ENCODE measurements at regions of chr11 and their contacts with region 1.

Region 1: GRCh38 chr11:59053387-59053786 is 32.7 kb upstream of the GLYATL1B start:
- DNase-seq: peak; percentile 80
- H3K4me3 Mint-ChIP-seq: no peak overlapping the region
- H3K27ac Mint-ChIP-seq: no peak overlapping the region
- H3K4me1 Mint-ChIP-seq: no peaks in the 10 kb centered on the region
- H3K27me3 Mint-ChIP-seq: peaks cover 39% of the 10 kb centered on the region
- CTCF ChIP-seq: peak; percentile 55

Region 2: GRCh38 chr11:58446294-58446693 is 607.1 kb before region 1 on chr11:
- CTCF ChIA-PET with region 1: no interaction called
- intact Hi-C with region 1: no loop called
- DNase-seq: no peak
- H3K4me3 Mint-ChIP-seq: no peak overlapping the region
- H3K27ac Mint-ChIP-seq: no peak overlapping the region
- H3K4me1 Mint-ChIP-seq: no peaks in the 10 kb centered on the region
- H3K27me3 Mint-ChIP-seq: no peaks in the 10 kb centered on the region
- CTCF ChIP-seq: no peak

Region 3: GRCh38 chr11:58856806-58857205 is 196.6 kb before region 1 on chr11:
- CTCF ChIA-PET with region 1: no interaction called
- intact Hi-C with region 1: loop called (anchors 10 kb)
- DNase-seq: no peak
- H3K4me3 Mint-ChIP-seq: no peak overlapping the region
- H3K27ac Mint-ChIP-seq: no peak overlapping the region
- H3K4me1 Mint-ChIP-seq: no peaks in the 10 kb centered on the region
- H3K27me3 Mint-ChIP-seq: peaks cover 45% of the 10 kb centered on the region
- CTCF ChIP-seq: no peak

Region 4: DNA sequence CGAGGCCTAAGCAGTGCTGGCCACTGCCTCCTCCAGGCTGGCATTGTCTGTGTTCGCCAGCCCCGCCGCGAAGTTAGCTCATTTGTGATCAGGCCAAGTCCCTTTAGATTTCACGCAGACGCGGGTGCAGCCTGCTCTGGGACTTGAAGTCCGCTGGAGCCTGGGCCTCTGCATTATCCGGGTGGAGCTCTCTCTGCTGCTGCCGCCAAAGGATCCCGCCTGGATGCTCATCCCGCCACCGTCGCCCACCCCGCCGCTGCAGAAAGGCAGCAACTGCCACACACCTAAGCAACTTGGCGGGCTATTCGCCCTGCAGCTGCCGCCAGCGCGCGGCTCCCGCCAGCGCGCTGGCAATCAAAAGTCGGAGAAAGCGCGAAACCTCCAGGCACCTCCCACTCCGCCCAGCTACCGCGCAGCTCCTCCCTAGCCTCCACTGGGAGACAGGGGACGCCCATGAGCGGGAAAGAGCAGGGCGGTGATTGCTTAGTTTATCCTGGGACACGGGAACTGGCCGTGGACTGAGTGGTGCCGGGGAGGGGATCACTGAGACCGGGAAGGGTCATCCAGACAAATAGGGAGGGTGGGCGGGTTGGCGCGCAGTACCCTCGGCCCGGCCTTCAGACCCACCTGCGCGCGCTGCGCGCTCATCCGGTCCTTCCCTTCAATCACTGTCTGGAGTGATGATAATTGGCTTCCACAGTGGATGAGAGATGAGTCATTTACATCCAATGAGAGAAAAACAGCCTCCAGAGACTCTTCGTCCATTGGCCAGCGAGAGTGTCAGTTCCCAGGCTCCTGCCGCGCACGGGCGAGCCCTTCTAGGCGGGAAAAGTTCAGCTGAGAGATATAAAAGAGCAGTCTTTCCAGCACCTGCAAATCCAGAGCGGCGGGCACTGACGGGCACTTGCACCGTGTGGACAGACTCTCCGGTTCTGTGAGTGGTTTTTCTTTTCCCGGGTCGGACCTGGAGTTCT is 53.3 kb after region 1 on chr11 and contains the start of gene FAM111B:
- CTCF ChIA-PET with region 1: no interaction called
- intact Hi-C with region 1: loop called (anchors 1 kb)
- DNase-seq: peak; percentile 87
- H3K4me3 Mint-ChIP-seq: peak within 1 kb of the TSS; percentile 93
- H3K27ac Mint-ChIP-seq: peak within 1 kb of the TSS; percentile 87
- H3K4me1 Mint-ChIP-seq: peaks cover 39% of the 10 kb centered on the region
- H3K27me3 Mint-ChIP-seq: no peaks in the 10 kb centered on the region
- CTCF ChIP-seq: no peak
- total RNA-seq, gene FAM111B: 35.5 and 39.5 TPM in 2 replicates

Region 5: DNA sequence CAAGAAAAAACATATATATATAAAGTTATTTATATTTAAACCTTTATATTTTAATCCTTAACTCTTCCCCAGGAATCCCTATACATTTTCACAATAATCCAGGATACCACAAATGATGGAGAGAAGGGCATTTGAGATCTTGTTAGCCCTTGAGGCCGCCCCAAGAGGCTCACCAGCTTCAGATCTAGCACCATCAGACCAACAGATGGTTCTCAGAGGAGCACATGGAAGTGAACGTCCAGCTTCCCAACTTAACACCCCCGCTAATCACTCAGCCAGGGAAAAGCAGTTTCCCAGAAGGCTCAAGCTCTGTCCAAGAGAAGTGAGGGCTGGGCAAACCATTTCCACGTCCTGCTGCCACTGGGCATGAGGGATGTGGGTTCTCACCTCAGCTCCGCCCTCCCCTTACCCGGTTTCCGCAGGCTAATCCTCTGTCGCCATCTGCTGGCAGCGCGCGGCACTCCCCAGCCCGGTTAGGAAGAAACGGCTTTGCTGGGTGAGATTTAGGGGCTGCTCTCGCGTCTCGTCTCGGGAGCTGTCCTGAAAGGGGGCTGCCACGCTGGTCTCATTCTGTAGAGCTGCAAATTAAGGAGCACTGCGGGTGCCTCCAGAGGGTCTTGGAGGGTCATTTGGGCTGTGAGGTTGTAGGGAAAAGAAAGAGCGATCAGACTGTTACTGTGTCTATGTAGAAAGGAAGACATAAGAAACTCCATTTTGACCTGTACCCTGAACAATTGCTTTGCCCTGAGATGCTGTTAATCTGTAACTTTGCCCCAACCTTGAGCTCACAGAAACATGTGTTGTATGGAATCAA is 82.5 kb after region 1 on chr11:
- CTCF ChIA-PET with region 1: interaction called, 7 read pairs
- intact Hi-C with region 1: loop called (anchors 2 kb)
- DNase-seq: peak; percentile 78
- H3K4me3 Mint-ChIP-seq: no peak overlapping the region
- H3K27ac Mint-ChIP-seq: no peak overlapping the region
- H3K4me1 Mint-ChIP-seq: peaks cover 12% of the 10 kb centered on the region
- H3K27me3 Mint-ChIP-seq: no peaks in the 10 kb centered on the region
- CTCF ChIP-seq: peak; percentile 75